ENCODE measurements at regions of chr19 and their contacts with region 1.

Region 1: DNA sequence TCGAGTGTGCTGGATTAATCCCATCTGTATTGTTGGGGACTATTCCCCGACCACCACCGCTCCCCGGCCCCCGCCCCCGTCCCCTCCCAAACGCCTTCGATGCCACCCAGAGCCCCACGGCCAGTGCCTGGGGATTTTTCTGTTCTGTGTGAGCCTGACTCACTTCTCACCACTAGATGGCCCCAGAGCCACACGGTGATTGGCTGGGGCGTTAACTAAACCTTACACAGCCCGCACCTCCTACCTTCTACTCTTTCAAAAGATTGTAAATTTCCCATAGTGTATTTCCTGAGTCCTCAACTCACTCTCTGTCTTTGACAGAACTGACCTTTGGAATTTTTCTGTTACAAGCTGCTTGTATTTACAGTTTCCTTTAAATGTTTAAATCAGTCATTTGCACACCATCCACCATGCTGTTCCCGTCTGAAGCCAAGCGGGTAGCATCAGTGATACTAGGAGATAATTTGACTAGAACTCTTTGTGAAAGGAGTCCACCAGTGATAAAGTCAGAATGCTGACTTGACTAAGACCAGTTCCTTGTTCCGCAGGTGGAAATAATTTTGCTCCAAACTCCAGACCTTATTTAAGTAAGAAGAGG is 61.4 kb downstream of the RFX2 start:
- DNase-seq: peak; percentile 81 to 86
- H3K4me3 ChIP-seq: peak overlapping the region in 1 of 2 donors; percentile 31
- H3K27ac ChIP-seq: peak overlapping the region; percentile 1 to 13
- H3K4me1 ChIP-seq: peaks cover 0 to 16% (median 8%) of the 10 kb centered on the region in 4 donors
- H3K27me3 ChIP-seq: no peaks in the 10 kb centered on the region
- CTCF ChIP-seq: peak; percentile 87 to 89

Region 2: DNA sequence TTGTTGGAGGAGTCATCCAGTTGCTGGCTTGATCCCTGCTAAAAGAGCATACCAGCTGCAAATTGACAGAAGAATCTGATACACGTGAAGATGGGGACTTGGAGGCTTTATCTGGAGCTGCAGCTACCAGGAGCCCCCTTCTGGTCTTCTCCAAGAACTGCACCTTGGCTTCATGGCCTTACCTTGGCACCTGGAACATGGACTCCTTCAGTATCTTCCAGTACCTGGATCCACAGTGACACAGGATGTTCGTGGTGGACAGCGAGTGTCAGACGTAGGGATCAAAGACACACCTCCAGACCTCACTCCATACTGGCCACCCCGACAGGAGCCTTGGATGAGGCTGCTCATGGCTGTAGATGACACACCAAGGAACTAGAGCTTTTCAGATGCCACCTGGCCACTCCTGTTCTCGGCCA is 76.7 kb after region 1 on chr19:
- intact Hi-C with region 1: loop called (anchors 1 kb)
- DNase-seq: peak; percentile 58 to 77
- H3K4me3 ChIP-seq: no peak overlapping the region
- H3K27ac ChIP-seq: no peak overlapping the region
- H3K4me1 ChIP-seq: no peaks in the 10 kb centered on the region
- H3K27me3 ChIP-seq: no peaks in the 10 kb centered on the region
- CTCF ChIP-seq: peak; percentile 98

Measured in tibial artery (tissue), 4 donors.